WTC11 (cell line): ENCODE measurements at regions of chr10 and their contacts with region 1.

Region 1: GRCh38 chr10:72692057-72692910 is at the start of gene MCU:
- DNase-seq: peak; percentile 96
- ATAC-seq: peak; percentile 14
- H3K4me3 Mint-ChIP-seq: peak within 1 kb of the TSS; percentile 87
- H3K27ac Mint-ChIP-seq: 0 out of 2 replicates have a peak within 1 kb of the TSS, but pooled peaks have one; percentile 64
- H3K4me1 Mint-ChIP-seq: peaks cover 25% of the 10 kb centered on the region
- H3K27me3 Mint-ChIP-seq: no peaks in the 10 kb centered on the region
- CTCF ChIP-seq: no peak
- total RNA-seq, gene MCU: 36.5 to 41.4 TPM (median 37.2 TPM) in 3 replicates

Region 2: GRCh38 chr10:72679838-72680241 is 12.4 kb before region 1 on chr10:
- CTCF ChIA-PET with region 1: interaction called, 4 read pairs
- POLR2A ChIA-PET with region 1: interaction called, 15 read pairs
- DNase-seq: no peak
- ATAC-seq: no peak
- H3K4me3 Mint-ChIP-seq: no peak overlapping the region
- H3K27ac Mint-ChIP-seq: no peak overlapping the region
- H3K4me1 Mint-ChIP-seq: no peaks in the 10 kb centered on the region
- H3K27me3 Mint-ChIP-seq: no peaks in the 10 kb centered on the region
- CTCF ChIP-seq: no peak

Region 3: GRCh38 chr10:72889391-72889831 is 197.1 kb after region 1 on chr10:
- CTCF ChIA-PET with region 1: no interaction called
- POLR2A ChIA-PET with region 1: no interaction called
- DNase-seq: no peak
- ATAC-seq: no peak
- H3K4me3 Mint-ChIP-seq: no peak overlapping the region
- H3K27ac Mint-ChIP-seq: no peak overlapping the region
- H3K4me1 Mint-ChIP-seq: peaks cover 39% of the 10 kb centered on the region
- H3K27me3 Mint-ChIP-seq: no peaks in the 10 kb centered on the region
- CTCF ChIP-seq: no peak